GM12878 (cell line): ENCODE measurements at regions of chr22 and their contacts with region 1.

Region 1: DNA sequence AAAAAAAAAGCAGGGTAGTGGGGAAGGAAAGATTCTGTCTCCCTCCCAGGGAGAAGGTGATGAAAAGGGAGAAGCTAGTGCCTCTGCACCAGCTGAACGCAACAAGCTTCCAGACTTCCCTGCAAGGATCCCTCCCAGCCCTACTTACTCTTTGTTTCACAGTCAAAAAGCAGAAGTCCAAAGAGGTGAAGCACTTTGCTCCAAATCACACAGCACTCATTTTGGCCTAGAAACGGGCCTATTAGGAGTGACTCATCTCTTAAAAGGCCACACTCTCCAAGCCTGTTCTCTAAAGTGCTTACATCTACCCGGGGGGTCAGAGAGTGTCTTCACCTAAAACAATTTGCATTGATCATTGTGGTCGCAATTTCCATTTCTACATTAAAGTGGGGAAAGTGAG is 17.7 kb upstream of the GRK3 start:
- DNase-seq: no peak
- ATAC-seq: peak; percentile 80
- H3K4me3 ChIP-seq: no peak overlapping the region
- H3K27ac ChIP-seq: no peak overlapping the region
- H3K4me1 ChIP-seq: no peaks in the 10 kb centered on the region; the same call in 1 of the 2 replicates
- H3K27me3 ChIP-seq: no peaks in the 10 kb centered on the region
- CTCF ChIP-seq: no peak
- EP300 ChIP-seq: no peak
- POLR2A ChIP-seq: no peak
- RAD21 ChIP-seq: no peak

Region 2: GRCh38 chr22:25447686-25448434 is 98.9 kb before region 1 on chr22:
- CTCF ChIA-PET with region 1: interaction called, 10 read pairs
- POLR2A ChIA-PET with region 1: interaction called, 3 read pairs
- RAD21 ChIA-PET with region 1: interaction called, 5 read pairs
- SMC1A ChIA-PET with region 1: interaction called, 4 read pairs
- in situ Hi-C with region 1: no loop called
- intact Hi-C with region 1: no loop called
- DNase-seq: peak; percentile 84
- ATAC-seq: peak; percentile 92
- H3K4me3 ChIP-seq: peak overlapping the region; percentile 83
- H3K27ac ChIP-seq: peak overlapping the region; percentile 70
- H3K4me1 ChIP-seq: no peaks in the 10 kb centered on the region; the same call in 1 of the 2 replicates
- H3K27me3 ChIP-seq: no peaks in the 10 kb centered on the region
- CTCF ChIP-seq: peak; percentile 85 to 97 (median 93)
- EP300 ChIP-seq: no peak
- POLR2A ChIP-seq: peak; percentile 64
- RAD21 ChIP-seq: peak; percentile 42

Region 3: DNA sequence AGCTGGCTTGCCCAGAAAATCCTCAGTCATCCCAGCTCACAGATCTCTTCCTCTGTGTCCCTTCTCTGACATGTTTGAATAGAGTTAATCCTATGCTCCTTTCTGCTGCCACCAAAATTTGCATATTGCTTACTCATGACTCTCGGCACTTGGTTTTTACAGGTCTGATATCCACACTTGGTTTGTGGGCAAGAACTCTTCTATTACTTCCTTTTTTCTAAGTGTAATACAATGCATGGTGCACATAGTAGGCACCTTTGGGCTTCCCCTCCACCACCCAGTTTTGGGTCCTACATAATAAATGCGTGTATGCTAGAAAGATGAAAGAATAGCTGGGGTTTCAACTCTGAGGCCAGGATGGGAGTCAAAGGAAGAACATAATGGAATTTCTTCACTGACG is 52.0 kb before region 1 on chr22:
- CTCF ChIA-PET with region 1: interaction called, 23 read pairs
- POLR2A ChIA-PET with region 1: interaction called, 4 read pairs
- RAD21 ChIA-PET with region 1: interaction called, 4 read pairs
- SMC1A ChIA-PET with region 1: interaction called, 18 read pairs
- in situ Hi-C with region 1: no loop called
- intact Hi-C with region 1: no loop called
- DNase-seq: peak; percentile 72
- ATAC-seq: peak; percentile 98
- H3K4me3 ChIP-seq: no peak overlapping the region
- H3K27ac ChIP-seq: no peak overlapping the region
- H3K4me1 ChIP-seq: peaks cover 13% of the 10 kb centered on the region
- H3K27me3 ChIP-seq: no peaks in the 10 kb centered on the region
- CTCF ChIP-seq: no peak
- EP300 ChIP-seq: peak; percentile 74 to 79; a peak in 3 of 4 replicates
- POLR2A ChIP-seq: no peak
- RAD21 ChIP-seq: no peak

Region 4: DNA sequence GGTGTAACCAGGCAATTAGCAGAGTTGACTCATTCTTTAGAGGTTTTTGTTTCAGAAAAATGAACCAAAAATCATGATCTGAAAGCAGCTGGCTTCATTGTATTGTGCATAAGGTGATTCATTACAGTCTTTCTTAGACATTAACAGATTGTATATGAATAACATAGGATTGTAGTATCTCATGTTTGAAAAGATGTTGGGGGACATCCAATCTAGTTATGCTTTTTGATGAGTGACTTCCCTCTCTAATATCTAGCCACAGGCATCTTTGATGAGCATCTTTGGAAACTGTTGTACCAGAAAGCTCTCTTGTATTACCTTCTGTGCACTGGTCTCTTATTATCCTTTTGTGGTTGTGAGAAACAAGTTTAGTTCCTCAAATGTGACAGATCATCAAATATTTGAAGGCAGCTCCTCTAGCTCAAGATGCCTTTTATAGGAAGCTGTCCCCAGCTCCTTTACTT is 26.0 kb after region 1 on chr22:
- CTCF ChIA-PET with region 1: interaction called, 89 read pairs
- POLR2A ChIA-PET with region 1: interaction called, 8 read pairs
- RAD21 ChIA-PET with region 1: interaction called, 202 read pairs
- SMC1A ChIA-PET with region 1: interaction called, 170 read pairs
- in situ Hi-C with region 1: no loop called
- intact Hi-C with region 1: no loop called
- DNase-seq: peak; percentile 80
- ATAC-seq: peak; percentile 81
- H3K4me3 ChIP-seq: 0 out of 2 replicates have a peak overlapping the region, but pooled peaks have one; percentile 0
- H3K27ac ChIP-seq: peak overlapping the region; percentile 64
- H3K4me1 ChIP-seq: peaks cover 28% of the 10 kb centered on the region
- H3K27me3 ChIP-seq: no peaks in the 10 kb centered on the region
- CTCF ChIP-seq: no peak
- EP300 ChIP-seq: peak; percentile 84 to 92
- POLR2A ChIP-seq: no peak
- RAD21 ChIP-seq: no peak

Region 5: GRCh38 chr22:25666308-25666707 is 119.6 kb after region 1 on chr22:
- CTCF ChIA-PET with region 1: interaction called, 12 read pairs
- POLR2A ChIA-PET with region 1: no interaction called
- RAD21 ChIA-PET with region 1: interaction called, 5 read pairs
- SMC1A ChIA-PET with region 1: interaction called, 9 read pairs
- in situ Hi-C with region 1: no loop called
- intact Hi-C with region 1: no loop called
- DNase-seq: no peak
- ATAC-seq: no peak
- H3K4me3 ChIP-seq: no peak overlapping the region
- H3K27ac ChIP-seq: no peak overlapping the region
- H3K4me1 ChIP-seq: no peaks in the 10 kb centered on the region
- H3K27me3 ChIP-seq: no peaks in the 10 kb centered on the region
- CTCF ChIP-seq: no peak
- EP300 ChIP-seq: no peak
- POLR2A ChIP-seq: no peak
- RAD21 ChIP-seq: no peak

Region 6: DNA sequence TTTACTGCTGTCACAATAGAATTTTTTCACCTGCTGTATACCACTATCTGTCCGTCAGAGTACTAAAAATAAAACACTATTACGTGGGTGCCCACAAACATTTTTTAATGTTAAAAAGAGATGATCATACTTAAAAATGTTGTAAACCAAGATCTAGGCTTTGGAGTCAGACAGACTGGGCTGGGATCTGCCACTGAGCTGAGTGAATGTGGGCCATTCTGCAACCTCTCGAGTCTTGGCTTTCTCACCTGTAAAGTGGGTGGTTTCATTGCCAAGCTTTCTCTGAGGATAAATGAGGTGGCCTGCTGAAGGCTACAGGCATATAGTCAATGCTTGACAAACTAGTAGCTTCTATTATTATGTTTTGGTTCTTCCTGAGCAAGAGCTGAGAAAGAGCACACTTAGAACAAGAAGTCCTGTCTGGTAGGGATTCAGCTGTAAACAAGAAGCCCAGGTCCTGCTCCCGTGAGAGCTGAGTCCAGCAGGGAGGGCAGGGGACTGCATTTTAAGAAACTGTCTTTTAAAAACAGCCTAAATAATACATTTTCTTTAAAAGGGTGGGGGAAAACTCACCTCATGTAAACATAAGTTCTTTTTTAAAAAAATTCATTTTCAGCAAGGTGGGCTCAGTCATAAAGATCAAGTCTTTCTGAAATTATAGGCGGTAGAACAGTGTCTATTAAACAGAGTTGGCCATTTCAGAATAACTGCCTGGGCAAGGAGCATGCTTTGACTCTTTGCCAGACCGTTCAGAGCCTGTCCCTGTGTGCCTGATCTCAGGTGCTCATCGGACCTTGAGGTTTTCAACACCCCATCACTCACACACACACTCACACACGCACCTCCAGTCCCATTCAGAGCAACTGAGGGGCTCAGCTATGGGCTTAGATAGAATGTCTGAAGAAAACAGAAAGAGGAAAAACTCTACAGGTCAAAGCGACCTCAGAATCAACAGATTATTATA is 166.0 kb after region 1 on chr22:
- CTCF ChIA-PET with region 1: interaction called, 15 read pairs
- POLR2A ChIA-PET with region 1: no interaction called
- RAD21 ChIA-PET with region 1: interaction called, 6 read pairs
- SMC1A ChIA-PET with region 1: interaction called, 10 read pairs
- in situ Hi-C with region 1: no loop called
- intact Hi-C with region 1: no loop called
- DNase-seq: no peak
- ATAC-seq: no peak
- H3K4me3 ChIP-seq: no peak overlapping the region
- H3K27ac ChIP-seq: no peak overlapping the region
- H3K4me1 ChIP-seq: peaks cover 5% of the 10 kb centered on the region; the same call in 1 of the 2 replicates
- H3K27me3 ChIP-seq: no peaks in the 10 kb centered on the region
- CTCF ChIP-seq: no peak
- EP300 ChIP-seq: no peak
- POLR2A ChIP-seq: no peak
- RAD21 ChIP-seq: no peak